Esophagus muscularis mucosa (tissue), 4 donors: ENCODE measurements at regions of chr10 and their contacts with region 1.

Region 1: DNA sequence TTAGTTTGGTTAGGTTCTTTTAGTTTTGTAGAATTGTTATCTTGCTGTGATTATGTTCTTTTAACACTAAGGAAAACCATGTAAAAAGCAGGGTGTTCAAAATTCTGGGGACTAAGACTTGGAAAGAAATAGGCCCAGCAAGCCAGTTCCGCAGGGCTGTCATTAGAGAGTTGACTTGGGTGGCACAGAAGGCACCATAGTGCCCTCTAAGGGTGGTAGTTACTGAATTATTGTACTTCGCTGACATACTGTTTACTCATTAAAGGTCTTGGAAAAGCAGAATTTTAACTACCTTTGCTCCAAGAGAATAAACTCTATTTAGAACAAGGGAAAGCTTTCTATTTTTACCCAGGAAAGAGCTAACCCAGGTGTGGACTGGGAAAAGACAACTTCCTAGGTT is 86.5 kb downstream of the OTUD1 start:
- DNase-seq: no peak
- H3K4me3 ChIP-seq: no peak overlapping the region
- H3K27ac ChIP-seq: no peak overlapping the region
- H3K4me1 ChIP-seq: no peaks in the 10 kb centered on the region
- H3K27me3 ChIP-seq: no peaks in the 10 kb centered on the region
- CTCF ChIP-seq: peak; percentile 40 to 53 (median 44)
- EP300 ChIP-seq: no peak
- POLR2A ChIP-seq: no peak

Region 2: GRCh38 chr10:23314835-23315239 is 210.6 kb before region 1 on chr10:
- intact Hi-C with region 1: loop called (anchors 2 kb)
- DNase-seq: peak; percentile 64
- H3K4me3 ChIP-seq: no peak overlapping the region
- H3K27ac ChIP-seq: no peak overlapping the region
- H3K4me1 ChIP-seq: peaks cover 0 to 20% (median 2%) of the 10 kb centered on the region in 4 donors
- H3K27me3 ChIP-seq: no peaks in the 10 kb centered on the region
- CTCF ChIP-seq: peak; percentile 68 to 73 (median 71)
- EP300 ChIP-seq: no peak
- POLR2A ChIP-seq: no peak

Region 3: DNA sequence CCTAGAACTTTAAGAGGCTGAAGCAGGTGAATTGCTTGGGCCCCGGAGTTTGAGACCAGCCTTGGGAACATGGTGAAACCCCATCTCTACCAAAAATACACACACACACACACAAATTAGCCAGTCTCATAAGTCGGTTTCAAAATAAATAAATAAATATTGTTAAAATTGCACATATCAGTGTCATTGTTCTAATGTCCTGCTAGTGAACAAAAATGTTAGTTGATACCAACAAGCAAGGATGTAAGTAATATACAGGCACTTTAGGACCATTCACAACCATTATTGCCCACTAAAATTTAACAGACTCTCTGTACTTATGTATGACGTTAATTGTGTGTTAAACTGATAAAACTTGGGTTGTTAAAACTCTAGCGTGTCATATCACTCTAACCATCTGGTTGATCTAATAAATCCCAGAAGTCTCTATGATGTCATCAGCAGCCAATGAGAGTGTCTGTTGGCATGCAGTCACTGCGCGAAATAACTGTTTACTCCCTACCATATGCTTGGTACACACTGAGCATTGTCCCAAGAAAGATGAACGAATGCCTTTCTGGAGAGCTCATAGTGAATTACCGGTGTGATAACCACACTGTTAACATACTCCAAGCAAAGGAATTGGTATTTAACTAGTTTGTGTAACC is 117.0 kb before region 1 on chr10:
- intact Hi-C with region 1: no loop called
- DNase-seq: no peak
- H3K4me3 ChIP-seq: no peak overlapping the region
- H3K27ac ChIP-seq: no peak overlapping the region
- H3K4me1 ChIP-seq: peaks cover 0 to 11% (median 0%) of the 10 kb centered on the region in 4 donors
- H3K27me3 ChIP-seq: no peaks in the 10 kb centered on the region
- CTCF ChIP-seq: no peak
- EP300 ChIP-seq: no peak
- POLR2A ChIP-seq: no peak

Region 4: DNA sequence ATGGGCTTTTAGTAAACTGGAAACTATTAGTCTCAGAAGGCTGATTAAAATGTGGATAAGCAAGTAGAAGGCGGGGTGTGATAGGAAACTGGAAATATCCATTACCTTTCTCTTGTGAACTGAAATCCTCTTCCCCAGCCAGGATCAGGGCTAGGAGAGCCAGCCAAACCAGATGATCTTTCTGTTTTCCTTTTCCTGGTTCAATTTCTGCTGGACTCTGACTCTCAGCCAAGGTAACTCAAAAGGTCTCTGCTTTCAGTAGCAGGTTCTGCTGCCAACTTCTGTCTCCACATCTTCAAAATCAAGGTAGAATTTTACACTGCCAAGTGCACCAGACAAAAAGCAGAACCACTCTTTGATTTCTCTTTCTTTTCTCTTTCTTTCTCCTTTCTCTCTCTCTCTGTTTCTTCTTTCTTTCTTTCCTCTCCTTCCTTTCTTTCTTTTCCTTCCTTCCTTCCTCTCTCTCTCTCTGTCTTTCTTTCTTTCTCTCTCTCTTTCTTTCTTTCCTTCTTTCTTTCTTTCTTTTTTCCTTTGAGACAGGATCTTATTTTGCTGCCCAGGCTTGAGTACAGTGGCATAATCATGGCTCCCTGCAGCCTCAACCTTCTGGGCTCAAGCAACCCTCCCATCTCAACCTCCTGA is 55.7 kb before region 1 on chr10:
- intact Hi-C with region 1: no loop called
- DNase-seq: no peak
- H3K4me3 ChIP-seq: no peak overlapping the region
- H3K27ac ChIP-seq: no peak overlapping the region
- H3K4me1 ChIP-seq: peaks cover 0 to 16% (median 8%) of the 10 kb centered on the region in 4 donors
- H3K27me3 ChIP-seq: no peaks in the 10 kb centered on the region
- CTCF ChIP-seq: no peak
- EP300 ChIP-seq: no peak
- POLR2A ChIP-seq: no peak

Region 5: DNA sequence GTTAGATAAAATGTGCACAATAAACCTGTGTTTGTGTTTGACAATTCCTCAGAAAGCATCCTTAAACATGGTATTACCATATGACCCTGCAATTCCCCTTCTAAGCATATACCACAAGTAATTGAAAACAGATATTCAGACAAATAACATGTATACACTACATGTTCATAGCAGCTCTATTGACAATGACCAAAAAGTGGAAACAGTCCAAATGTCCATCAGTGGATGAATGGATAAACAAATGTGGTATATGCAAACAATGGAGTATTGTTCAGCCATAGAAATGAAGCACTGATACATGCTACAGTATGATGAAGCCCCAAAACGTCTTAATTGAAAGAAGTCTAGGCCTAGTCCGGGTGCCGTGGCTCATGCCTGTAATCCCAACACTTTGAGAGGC is 193.5 kb after region 1 on chr10:
- intact Hi-C with region 1: no loop called
- DNase-seq: no peak
- H3K4me3 ChIP-seq: no peak overlapping the region
- H3K27ac ChIP-seq: no peak overlapping the region
- H3K4me1 ChIP-seq: no peaks in the 10 kb centered on the region
- H3K27me3 ChIP-seq: no peaks in the 10 kb centered on the region
- CTCF ChIP-seq: no peak
- EP300 ChIP-seq: no peak
- POLR2A ChIP-seq: no peak